ENCODE measurements at regions of chr1 and their contacts with region 1.

Region 1: GRCh38 chr1:26372039-26372438 is 511 bp downstream of the ZNF683 start:
- DNase-seq: no peak
- ATAC-seq: no peak
- H3K4me3 Mint-ChIP-seq: no peak overlapping the region
- H3K27ac Mint-ChIP-seq: no peak overlapping the region
- H3K4me1 Mint-ChIP-seq: peaks cover 27% of the 10 kb centered on the region
- H3K27me3 Mint-ChIP-seq: peaks cover 3% of the 10 kb centered on the region
- CTCF ChIP-seq: no peak

Region 2: DNA sequence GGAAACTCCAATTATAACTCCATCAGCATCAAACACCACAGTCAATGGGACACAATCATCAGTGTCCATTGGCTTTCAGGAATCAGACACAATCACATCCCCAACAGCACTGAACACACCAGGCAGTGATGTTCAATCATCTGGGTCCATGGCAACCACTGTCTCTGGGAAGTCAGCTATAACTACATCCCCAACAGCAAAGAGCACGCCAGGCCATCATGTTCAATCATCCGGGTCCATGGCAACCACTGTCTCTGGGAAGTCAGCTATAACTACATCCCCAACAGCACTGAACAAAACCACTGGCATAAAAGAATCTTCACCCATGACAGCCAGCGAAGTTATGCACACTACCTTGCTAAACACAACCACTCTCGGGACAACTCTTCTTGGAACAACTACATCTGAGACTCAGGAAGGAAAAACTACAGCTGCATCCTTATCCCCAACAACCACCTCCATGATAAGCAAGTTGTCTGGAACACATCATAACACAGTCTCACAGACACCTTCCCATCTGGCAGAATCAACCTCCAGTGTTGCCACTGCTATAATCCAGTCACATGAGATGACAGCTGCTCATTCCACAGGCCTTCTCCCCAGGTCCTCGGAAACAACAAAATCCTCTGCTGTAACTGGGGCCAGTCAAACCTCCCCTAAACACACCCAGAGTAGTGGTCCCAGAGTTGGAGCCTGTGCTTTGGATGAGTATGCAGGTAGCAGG is 161.7 kb before region 1 on chr1:
- CTCF ChIA-PET with region 1: no interaction called
- POLR2A ChIA-PET with region 1: interaction called, 12 read pairs
- intact Hi-C with region 1: no loop called
- DNase-seq: no peak
- ATAC-seq: no peak
- H3K4me3 Mint-ChIP-seq: no peak overlapping the region
- H3K27ac Mint-ChIP-seq: no peak overlapping the region
- H3K4me1 Mint-ChIP-seq: no peaks in the 10 kb centered on the region
- H3K27me3 Mint-ChIP-seq: peaks cover 3% of the 10 kb centered on the region
- CTCF ChIP-seq: no peak

Measured in activated B cell treated with CpG ODN at 0.5 μM for 24 hours (primary cell).